Breast epithelium (tissue), 4 donors: ENCODE measurements at regions of chr9 and their contacts with region 1.

Region 1: DNA sequence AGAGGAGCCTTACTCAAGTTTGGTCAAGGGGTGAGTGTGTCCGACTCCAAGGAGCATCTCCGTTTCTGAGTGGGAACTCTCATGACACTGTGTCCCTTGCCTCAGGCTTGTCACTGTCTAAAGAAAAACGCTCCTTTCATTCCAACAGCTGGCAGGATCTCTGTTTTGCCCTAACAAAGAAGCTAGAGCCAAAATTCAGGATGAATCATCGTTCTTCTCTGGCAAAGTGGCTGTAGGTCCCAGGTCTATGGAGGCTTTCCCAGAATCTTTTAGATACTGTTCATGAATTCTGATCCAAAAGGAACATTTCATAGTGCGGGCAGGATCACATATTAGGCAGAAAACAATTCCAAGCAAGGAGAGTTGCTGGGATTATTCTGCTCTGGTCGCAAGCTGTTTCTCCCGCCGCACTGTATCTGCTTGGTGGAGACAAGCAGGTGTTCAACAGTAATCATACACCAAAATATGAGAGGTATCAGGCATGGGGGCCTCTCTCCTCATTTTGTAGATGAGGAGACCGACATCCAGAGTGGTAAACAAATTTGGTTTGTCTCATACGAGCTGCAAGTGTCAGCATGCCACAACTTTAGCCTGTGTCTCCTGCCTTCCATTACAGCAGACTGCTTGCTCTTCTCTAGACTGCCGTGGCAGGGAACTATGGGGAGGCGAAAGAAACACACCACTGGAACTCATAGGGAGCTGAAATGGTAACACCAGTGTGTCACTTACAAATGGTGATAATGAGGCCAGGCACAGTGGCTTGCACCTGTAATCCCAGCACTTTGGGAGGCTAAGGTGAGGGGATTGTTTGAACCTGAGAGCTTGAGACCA is 72.6 kb downstream of the ENTREP1 start:
- DNase-seq: peak in 1 of 2 donors; percentile 86
- H3K4me3 ChIP-seq: peak overlapping the region in 1 of 3 donors; percentile 16
- H3K27ac ChIP-seq: peak overlapping the region; percentile 84 to 88
- H3K4me1 ChIP-seq: peaks cover 0 to 4% of the 10 kb centered on the region in 2 donors
- H3K27me3 ChIP-seq: no peaks in the 10 kb centered on the region
- CTCF ChIP-seq: no peak
- POLR2A ChIP-seq: peak; percentile 26

Region 2: DNA sequence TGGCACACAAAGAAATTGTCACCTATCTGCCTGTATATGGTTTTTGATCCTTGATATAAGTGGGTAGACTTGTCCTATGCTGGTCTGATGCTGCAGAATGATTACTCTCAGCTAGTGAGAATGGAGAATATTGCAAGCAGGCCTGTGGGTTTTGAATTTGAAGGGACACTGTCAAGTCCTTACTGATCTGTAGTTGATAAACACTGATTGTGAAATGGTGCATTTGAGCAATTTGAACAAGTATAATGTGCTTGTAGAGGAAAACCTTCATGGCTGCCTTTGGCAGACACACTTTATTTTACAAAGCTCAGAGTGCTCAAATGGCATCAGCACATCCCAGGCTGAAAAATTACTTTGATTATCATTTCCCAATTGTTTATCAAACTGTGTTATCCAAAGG is 63.3 kb before region 1 on chr9:
- intact Hi-C with region 1: loop called (anchors 2 kb)
- DNase-seq: no peak
- H3K4me3 ChIP-seq: no peak overlapping the region
- H3K27ac ChIP-seq: no peak overlapping the region
- H3K4me1 ChIP-seq: no peaks in the 10 kb centered on the region
- H3K27me3 ChIP-seq: no peaks in the 10 kb centered on the region
- CTCF ChIP-seq: no peak
- POLR2A ChIP-seq: no peak

Region 3: GRCh38 chr9:69376651-69377050 is 20.9 kb before region 1 on chr9:
- intact Hi-C with region 1: loop called (anchors 1 kb)
- DNase-seq: peak in 1 of 2 donors; percentile 61
- H3K4me3 ChIP-seq: peak overlapping the region in 1 of 3 donors; percentile 6
- H3K27ac ChIP-seq: peak overlapping the region; percentile 59 to 70
- H3K4me1 ChIP-seq: peaks cover 0 to 4% of the 10 kb centered on the region in 2 donors
- H3K27me3 ChIP-seq: no peaks in the 10 kb centered on the region
- CTCF ChIP-seq: no peak
- POLR2A ChIP-seq: no peak

Region 4: DNA sequence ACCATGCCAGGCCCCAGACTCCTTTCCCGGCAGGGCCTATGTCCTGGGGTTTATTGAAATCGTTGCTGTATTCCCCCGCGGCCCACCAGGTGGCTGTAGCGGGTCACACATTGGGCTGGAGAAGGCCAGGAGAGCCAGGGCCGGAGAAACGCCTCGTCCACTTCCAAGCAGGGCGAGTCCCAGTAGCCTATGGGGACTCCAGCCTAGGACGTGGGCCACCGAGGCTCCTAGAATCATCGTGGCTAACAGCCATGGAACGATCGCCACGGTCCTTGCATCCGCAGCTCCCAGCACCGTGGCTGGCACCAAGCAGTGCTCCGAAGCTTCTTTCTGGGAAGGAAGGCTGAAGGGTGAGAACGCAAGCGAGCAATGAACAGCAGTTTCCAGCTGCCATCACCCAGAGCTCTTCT is 15.1 kb after region 1 on chr9:
- intact Hi-C with region 1: no loop called
- DNase-seq: no peak
- H3K4me3 ChIP-seq: peak overlapping the region in 1 of 3 donors; percentile 32
- H3K27ac ChIP-seq: peak overlapping the region; percentile 2 to 5
- H3K4me1 ChIP-seq: no peaks in the 10 kb centered on the region
- H3K27me3 ChIP-seq: no peaks in the 10 kb centered on the region
- CTCF ChIP-seq: peak in 2 of 3 donors; percentile 24 to 49
- POLR2A ChIP-seq: no peak

Region 5: GRCh38 chr9:70635763-70636162 is 1238.2 kb after region 1 on chr9:
- intact Hi-C with region 1: no loop called
- DNase-seq: no peak
- H3K4me3 ChIP-seq: no peak overlapping the region
- H3K27ac ChIP-seq: no peak overlapping the region
- H3K4me1 ChIP-seq: no peaks in the 10 kb centered on the region
- H3K27me3 ChIP-seq: no peaks in the 10 kb centered on the region
- CTCF ChIP-seq: no peak
- POLR2A ChIP-seq: no peak